Vagina (tissue), 2 donors: ENCODE measurements at regions of chr10 and their contacts with region 1.

Region 1: DNA sequence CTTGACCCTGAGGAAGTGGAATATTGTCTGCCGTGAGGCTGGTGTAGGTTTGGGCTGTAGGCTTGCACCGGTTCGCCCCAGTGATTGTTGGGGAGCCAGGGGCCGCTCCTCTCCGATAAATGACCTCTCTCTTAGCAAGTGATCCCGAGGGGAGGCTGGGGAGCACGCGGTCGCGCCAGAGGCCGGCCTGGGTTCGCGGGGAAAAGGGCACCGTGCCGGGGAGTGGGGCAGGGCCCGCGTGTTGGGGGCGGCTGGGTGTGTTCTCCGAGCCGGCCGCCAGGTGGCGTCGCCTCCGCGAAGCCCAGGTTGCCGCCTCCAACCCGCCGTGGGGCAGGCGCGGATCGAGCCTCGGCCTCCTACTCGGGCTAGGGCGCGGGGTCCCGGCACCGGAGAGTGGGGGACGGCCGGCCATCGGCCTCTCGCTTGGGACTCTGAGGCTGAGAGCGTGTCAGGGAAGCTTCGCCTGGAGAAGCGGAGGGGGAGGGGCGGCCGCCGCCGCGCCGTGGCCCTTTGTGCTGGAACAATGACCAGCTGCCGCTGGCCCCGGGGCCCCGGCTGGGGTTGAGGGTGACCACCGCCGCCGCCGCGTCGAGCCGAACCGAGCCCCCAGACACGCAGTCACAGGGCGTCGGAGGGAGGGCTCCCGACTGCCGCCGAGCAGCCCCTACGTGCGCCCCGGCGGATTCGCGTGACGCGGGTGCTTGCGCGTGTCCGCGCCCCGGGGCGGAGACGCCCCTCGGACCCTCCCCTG is 442 bp upstream of the LZTS2 start:
- DNase-seq: no peak
- H3K4me3 ChIP-seq: peak overlapping the region; percentile 79 to 92
- H3K27ac ChIP-seq: peak overlapping the region; percentile 100
- H3K4me1 ChIP-seq: peaks cover 41% of the 10 kb centered on the region
- H3K27me3 ChIP-seq: no peaks in the 10 kb centered on the region
- CTCF ChIP-seq: peak; percentile 87 to 95 (median 95)
- POLR2A ChIP-seq: peak in 1 of 2 donors; percentile 96

Region 2: DNA sequence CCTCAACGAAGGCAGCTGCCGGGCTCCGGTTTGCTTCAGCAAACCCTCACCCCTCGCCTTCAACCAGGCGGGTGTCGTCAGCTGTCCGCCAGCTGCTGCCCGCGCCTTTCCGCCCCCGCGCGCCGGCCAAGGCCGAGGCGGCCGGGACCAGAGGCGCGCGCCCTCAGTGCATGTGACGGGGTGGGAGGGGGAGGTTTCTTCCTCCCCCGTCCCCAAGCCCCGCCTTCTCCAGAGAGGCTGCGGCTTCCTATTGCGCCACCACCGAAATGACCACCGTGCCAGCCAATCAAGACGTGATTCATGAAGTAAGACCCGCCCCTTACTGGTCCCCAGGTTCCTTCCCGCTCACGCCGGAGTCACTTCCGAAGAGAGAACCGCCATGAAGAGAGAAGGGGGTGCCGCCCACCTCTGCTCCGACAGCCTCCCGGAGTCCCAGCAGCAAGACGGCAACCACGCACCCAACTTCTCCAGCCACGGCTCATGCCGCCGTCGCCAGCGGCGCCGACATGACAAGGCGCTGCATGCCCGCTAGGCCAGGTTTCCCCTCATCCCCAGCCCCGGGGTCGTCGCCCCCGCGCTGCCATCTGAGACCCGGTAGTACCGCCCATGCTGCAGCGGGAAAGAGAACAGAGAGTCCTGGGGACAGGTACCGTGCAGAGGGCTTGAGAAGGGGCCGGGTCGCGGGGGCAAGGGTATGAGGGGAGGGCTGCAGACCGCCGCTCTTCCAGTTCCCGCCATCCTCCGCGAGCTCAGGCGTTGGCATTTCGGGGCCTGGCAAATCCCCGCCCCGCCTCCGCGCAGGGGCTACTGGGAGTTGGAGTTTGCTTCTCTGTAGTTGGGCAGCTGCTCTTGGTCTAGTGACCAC is 86.3 kb before region 1 on chr10 and contains the start of gene SLF2:
- intact Hi-C with region 1: loop called (anchors 5 kb)
- DNase-seq: peak in 1 of 2 donors; percentile 99
- H3K4me3 ChIP-seq: peak within 1 kb of the TSS; percentile 99 to 100
- H3K27ac ChIP-seq: peak within 1 kb of the TSS; percentile 92
- H3K4me1 ChIP-seq: peaks cover 31% of the 10 kb centered on the region
- H3K27me3 ChIP-seq: no peaks in the 10 kb centered on the region
- CTCF ChIP-seq: peak in 1 of 3 experiments; percentile 11
- POLR2A ChIP-seq: peak in 1 of 2 donors; percentile 69
- total RNA-seq, gene SLF2: 26.8 TPM

Region 3: DNA sequence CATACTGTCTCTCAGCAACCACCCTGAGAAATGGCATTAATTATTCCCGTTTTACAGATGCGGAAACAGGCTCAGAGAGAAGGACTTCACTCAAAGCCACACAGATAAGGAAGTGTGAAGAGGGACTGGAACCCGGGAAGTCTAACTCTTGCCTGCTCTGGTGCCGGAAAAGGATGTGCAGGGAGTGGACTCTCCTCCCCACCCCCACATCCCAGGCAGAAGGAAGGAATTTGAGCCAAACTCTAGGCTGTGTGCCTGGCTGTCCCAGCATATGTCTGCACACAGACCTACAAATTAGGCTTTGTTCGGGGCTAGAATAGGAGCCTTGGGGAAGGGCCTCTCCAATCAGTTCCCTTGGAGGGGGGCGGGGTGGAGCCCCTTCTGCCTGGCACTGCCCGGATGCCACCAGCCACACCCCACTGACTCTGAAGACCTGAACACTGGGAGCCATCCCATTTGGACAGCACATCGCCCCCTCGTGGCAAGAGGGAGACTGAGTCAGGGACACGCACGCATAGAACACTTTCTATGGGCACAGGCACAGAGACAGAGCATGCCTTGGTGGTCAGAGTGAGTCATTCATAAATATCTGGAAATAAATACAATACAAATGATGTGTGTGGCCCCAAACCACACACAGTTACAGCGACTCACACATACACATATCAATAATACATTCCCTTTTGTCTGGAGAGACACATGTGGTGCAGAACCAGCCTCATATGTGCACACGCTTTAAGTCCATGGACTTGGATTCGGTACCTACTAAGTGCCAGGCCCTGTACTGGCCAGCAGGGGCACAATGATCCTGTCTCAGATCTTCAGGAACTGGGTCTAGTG is 13.6 kb after region 1 on chr10:
- intact Hi-C with region 1: loop called (anchors 2 kb)
- DNase-seq: no peak
- H3K4me3 ChIP-seq: no peak overlapping the region
- H3K27ac ChIP-seq: peak overlapping the region; percentile 38
- H3K4me1 ChIP-seq: peaks cover 18% of the 10 kb centered on the region
- H3K27me3 ChIP-seq: no peaks in the 10 kb centered on the region
- CTCF ChIP-seq: peak; percentile 73 to 94 (median 89)
- POLR2A ChIP-seq: no peak